K562 (cell line): ENCODE measurements at regions of chr17 and their contacts with region 1.

Region 1: DNA sequence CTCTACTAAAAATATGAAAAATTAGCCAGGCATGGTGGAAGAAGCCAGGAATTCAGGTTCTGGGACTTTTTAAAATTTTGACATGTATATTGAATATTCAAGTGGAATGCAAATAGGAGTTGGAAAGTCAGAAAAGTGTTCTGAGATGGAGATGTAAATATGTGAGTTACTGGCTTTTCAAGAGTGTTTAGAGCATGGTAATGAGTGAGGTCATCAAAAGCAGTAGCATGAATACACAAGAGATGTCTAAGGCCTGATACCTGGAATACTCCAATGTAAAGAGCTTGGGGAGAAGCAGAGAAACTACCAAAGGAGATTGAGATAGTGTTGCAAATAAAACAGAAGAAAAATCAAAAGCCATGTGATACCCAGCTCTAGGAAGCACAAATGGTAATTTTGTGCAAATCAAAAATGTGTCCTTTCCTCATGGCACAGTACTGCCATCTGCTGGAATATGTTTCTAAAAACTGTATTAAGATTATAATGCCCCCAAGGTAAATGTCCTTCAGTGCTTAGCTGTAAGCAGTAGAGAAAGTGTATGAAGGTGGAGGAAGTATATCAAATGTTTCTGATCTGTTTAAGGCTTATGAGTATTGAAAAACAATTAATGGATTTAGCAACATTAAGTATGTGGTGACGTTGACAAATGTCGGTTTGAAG is 908.5 kb downstream of the KCNJ18 start:
- DNase-seq: peak in 1 of 4 experiments; percentile 49
- ATAC-seq: no peak
- H3K4me3 ChIP-seq: no peak overlapping the region
- H3K27ac ChIP-seq: no peak overlapping the region
- H3K4me1 ChIP-seq: no peaks in the 10 kb centered on the region
- H3K27me3 ChIP-seq: no peaks in the 10 kb centered on the region
- CTCF ChIP-seq: peak in 1 of 3 experiments; percentile 21; a peak in 2 of 6 replicates
- EP300 ChIP-seq: no peak
- POLR2A ChIP-seq: no peak
- RAD21 ChIP-seq: peak in 1 of 2 experiments; percentile 37; a peak in 2 of 4 replicates

Region 2: DNA sequence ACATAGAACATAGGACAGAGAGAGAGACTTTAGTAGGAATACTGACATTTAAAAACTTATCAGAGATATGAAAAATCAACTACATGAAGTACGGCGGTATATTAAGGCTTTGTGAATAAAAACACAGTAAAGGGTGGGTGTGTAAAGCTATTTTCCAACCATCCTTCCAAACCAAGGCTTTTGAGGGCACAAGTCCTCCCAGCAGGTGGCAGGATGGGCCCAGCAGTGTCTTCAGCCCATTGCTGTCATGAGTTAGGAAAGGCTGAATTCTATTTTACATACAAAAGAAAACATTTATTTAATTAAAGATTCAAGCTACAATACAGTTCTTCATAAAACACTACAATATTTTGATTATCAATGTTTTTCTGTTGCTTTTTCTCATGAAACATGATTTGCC is 67.0 kb before region 1 on chr17:
- CTCF ChIA-PET with region 1: no interaction called
- POLR2A ChIA-PET with region 1: no interaction called
- in situ Hi-C with region 1: no loop called
- intact Hi-C with region 1: loop called (anchors 5 kb)
- DNase-seq: no peak
- ATAC-seq: no peak
- H3K4me3 ChIP-seq: no peak overlapping the region
- H3K27ac ChIP-seq: no peak overlapping the region
- H3K4me1 ChIP-seq: no peaks in the 10 kb centered on the region
- H3K27me3 ChIP-seq: no peaks in the 10 kb centered on the region
- CTCF ChIP-seq: no peak
- EP300 ChIP-seq: no peak
- POLR2A ChIP-seq: no peak
- RAD21 ChIP-seq: no peak